H1 (cell line): ENCODE measurements at regions of chr1 and their contacts with region 1.

Region 1: GRCh38 chr1:75316230-75316629 is 182.0 kb downstream of the LHX8 start:
- DNase-seq: no peak
- H3K4me3 ChIP-seq: no peak overlapping the region
- H3K27ac ChIP-seq: no peak overlapping the region
- H3K4me1 ChIP-seq: no peaks in the 10 kb centered on the region
- H3K27me3 ChIP-seq: no peaks in the 10 kb centered on the region
- CTCF ChIP-seq: no peak
- EP300 ChIP-seq: no peak
- POLR2A ChIP-seq: no peak
- RAD21 ChIP-seq: no peak

Region 2: DNA sequence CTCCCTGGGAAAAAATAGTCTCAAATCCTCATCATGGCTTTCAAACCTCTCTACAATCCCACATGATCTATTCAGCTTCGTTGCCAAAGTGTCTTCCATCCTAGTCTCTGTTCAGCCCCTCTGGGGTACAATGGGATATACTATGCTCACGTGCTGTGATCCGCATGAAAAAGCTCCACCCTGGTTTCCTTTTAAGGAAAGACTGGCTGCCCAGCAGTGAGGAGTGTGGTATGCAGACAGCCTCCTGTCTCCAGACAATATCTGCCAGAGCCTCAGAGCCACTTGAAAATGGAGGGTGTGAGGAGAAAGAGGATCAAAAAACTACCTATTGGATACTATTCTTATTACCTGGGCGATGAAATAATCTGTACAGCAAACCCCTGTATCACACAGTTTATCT is 12.5 kb after region 1 on chr1:
- CTCF ChIA-PET with region 1: interaction called, 25 read pairs
- POLR2A ChIA-PET with region 1: interaction called, 4 read pairs
- DNase-seq: no peak
- H3K4me3 ChIP-seq: no peak overlapping the region
- H3K27ac ChIP-seq: no peak overlapping the region
- H3K4me1 ChIP-seq: peaks cover 0 to 3% (median 0%) of the 10 kb centered on the region in 4 experiments; a peak in 1 of 7 replicates
- H3K27me3 ChIP-seq: no peaks in the 10 kb centered on the region
- CTCF ChIP-seq: no peak
- EP300 ChIP-seq: no peak
- POLR2A ChIP-seq: no peak
- RAD21 ChIP-seq: no peak